ENCODE measurements at regions of chr5 and their contacts with region 1.

Region 1: DNA sequence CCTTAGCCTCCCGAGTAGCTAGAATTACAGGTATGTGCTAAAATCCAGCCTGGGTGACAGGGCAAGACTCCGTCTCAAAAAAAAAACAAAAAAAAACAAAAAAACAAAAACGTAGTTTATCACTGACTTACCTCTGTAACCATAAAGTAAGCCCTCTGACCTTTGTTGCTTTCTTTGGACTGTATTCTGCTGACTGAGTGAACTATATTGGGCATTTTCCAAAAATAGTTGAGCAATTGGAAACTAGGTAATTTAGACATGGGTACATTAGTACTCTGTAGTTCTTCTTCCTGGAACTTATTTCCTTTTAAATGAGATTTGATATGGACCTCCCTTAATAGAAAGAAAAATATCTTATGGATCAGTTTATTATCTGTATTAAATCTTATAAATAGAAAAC is 66.6 kb downstream of the ANKHD1 start:
- DNase-seq: no peak
- H3K4me3 ChIP-seq: no peak overlapping the region
- H3K27ac ChIP-seq: no peak overlapping the region
- H3K4me1 ChIP-seq: peaks cover 0 to 2% of the 10 kb centered on the region in 2 donors
- H3K27me3 ChIP-seq: no peaks in the 10 kb centered on the region
- CTCF ChIP-seq: no peak

Region 2: DNA sequence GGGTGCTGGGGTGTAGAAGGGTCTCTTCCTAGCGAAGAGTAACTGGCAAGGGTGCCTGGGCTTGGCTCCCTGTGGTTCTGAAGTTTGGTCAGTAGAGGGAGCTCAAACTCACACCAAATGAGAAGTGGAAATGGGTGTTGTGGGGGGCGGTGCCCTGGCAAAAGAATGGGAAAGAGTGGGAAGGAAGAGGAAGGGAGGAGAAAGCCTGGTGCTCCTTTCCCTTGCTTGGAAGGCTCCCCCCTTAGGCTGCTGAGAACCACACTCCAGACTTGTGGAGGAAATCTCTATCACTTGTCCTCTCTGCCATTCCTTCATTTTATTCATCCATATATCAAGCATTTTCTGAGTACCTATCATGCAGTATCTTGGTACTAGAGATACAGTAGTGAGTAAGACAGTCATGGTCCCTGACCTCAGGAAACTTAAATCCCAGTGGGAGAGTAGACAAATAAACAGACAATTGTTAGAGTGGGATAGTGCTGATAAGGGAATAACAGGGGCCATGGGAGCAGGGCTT is 95.2 kb before region 1 on chr5:
- intact Hi-C with region 1: loop called (anchors 10 kb)
- DNase-seq: peak in 1 of 2 donors; percentile 85
- H3K4me3 ChIP-seq: no peak overlapping the region
- H3K27ac ChIP-seq: no peak overlapping the region
- H3K4me1 ChIP-seq: peaks cover 0 to 3% of the 10 kb centered on the region in 2 donors
- H3K27me3 ChIP-seq: no peaks in the 10 kb centered on the region
- CTCF ChIP-seq: peak; percentile 65 to 84 (median 82)